ENCODE measurements at regions of chr5 and their contacts with region 1.

Region 1: GRCh38 chr5:91383027-91383955 is at the start of gene ARRDC3:
- DNase-seq: peak; percentile 99
- H3K4me3 ChIP-seq: peak within 1 kb of the TSS; percentile 47 to 78 (median 62)
- H3K27ac ChIP-seq: peak within 1 kb of the TSS; percentile 93 to 100 (median 99)
- H3K4me1 ChIP-seq: peaks cover 8 to 36% (median 23%) of the 10 kb centered on the region in 6 donors
- H3K27me3 ChIP-seq: no peaks in the 10 kb centered on the region
- CTCF ChIP-seq: peak in 3 of 11 experiments; percentile 15 to 43 (median 20)
- POLR2A ChIP-seq: peak; percentile 93 to 100 (median 97)
- total RNA-seq, gene ARRDC3: 32.5 to 124 (median 52.8) TPM

Region 2: GRCh38 chr5:90932052-90932699 is 451.1 kb before region 1 on chr5:
- intact Hi-C with region 1: loop called (anchors 10 kb)
- DNase-seq: no peak
- H3K4me3 ChIP-seq: no peak overlapping the region
- H3K27ac ChIP-seq: no peak overlapping the region
- H3K4me1 ChIP-seq: no peaks in the 10 kb centered on the region
- H3K27me3 ChIP-seq: no peaks in the 10 kb centered on the region
- CTCF ChIP-seq: peak; percentile 28 to 73 (median 57)
- POLR2A ChIP-seq: no peak

Region 3: GRCh38 chr5:91162534-91163381 is 220.5 kb before region 1 on chr5:
- intact Hi-C with region 1: no loop called
- DNase-seq: peak; percentile 82
- H3K4me3 ChIP-seq: peak overlapping the region in 1 of 8 donors; percentile 23
- H3K27ac ChIP-seq: peak overlapping the region in 7 of 8 donors; percentile 47 to 83 (median 74)
- H3K4me1 ChIP-seq: peaks cover 5 to 24% (median 15%) of the 10 kb centered on the region in 6 donors
- H3K27me3 ChIP-seq: no peaks in the 10 kb centered on the region
- CTCF ChIP-seq: no peak
- POLR2A ChIP-seq: no peak

Region 4: GRCh38 chr5:91225848-91226686 is 157.2 kb before region 1 on chr5:
- intact Hi-C with region 1: loop called (anchors 5 kb)
- DNase-seq: no peak
- H3K4me3 ChIP-seq: no peak overlapping the region
- H3K27ac ChIP-seq: no peak overlapping the region
- H3K4me1 ChIP-seq: no peaks in the 10 kb centered on the region
- H3K27me3 ChIP-seq: no peaks in the 10 kb centered on the region
- CTCF ChIP-seq: peak in 9 of 11 experiments; percentile 22 to 70 (median 52)
- POLR2A ChIP-seq: no peak

Region 5: DNA sequence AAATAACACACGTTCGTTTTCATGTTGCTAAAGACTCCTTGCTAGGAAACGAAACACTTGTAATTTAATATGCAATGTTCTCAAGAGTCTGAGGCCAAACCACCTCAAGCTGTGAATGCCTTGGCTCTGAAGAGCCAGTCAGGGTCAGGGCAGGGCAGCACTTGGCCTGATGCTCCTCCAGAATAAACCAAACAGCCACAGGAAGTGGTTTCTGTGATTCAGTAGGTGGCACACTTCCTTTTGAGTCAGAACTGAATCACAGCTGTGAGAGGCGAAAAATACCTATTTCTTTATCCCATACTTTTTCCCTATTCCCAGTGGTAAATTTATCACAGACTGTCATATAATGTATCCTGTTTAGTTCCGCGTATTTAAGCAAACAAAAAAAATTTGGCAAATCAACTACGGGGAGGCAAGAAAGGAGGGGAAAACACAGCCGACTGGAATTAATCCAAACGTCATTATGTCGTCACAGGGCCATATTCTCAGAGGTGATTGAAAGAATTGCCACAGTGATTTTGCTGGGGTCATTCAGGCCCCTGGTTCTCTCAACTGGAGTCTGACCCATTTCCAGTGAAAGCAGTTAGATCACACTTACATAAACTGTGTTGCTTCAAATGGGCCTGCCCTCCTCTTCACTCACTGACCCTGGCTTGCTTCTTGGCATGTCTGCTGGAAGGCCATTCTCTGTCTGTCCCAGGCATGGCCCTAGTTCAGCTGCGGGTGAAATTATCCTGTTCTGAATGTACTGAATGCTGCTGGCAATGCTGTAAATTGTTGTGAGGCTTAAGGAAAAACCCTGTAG is 71.4 kb before region 1 on chr5:
- intact Hi-C with region 1: no loop called
- DNase-seq: peak; percentile 84
- H3K4me3 ChIP-seq: peak overlapping the region in 1 of 8 donors; percentile 57
- H3K27ac ChIP-seq: peak overlapping the region; percentile 73 to 89 (median 81)
- H3K4me1 ChIP-seq: peaks cover 30 to 65% (median 43%) of the 10 kb centered on the region in 6 donors
- H3K27me3 ChIP-seq: no peaks in the 10 kb centered on the region
- CTCF ChIP-seq: peak in 3 of 11 experiments; percentile 9 to 23 (median 21)
- POLR2A ChIP-seq: no peak

Region 6: DNA sequence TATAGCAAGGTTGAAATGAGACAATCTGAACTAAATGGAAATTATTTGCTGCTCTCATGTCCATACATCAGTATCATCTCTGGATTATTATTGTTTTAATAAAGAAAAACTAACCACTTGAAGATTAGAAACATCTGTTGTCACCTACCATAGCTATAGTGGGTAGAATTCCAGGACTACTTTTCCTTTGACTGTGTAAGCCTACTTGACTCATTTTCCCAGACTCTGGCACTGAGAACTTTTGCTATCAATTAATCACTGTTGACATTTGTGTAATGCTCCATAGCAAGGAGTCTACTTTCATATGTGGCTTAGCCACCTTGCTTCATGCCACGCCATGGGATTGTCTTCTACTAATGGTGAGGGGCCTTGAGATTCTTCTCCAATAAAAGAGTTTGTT is 59.7 kb after region 1 on chr5:
- intact Hi-C with region 1: no loop called
- DNase-seq: no peak
- H3K4me3 ChIP-seq: no peak overlapping the region
- H3K27ac ChIP-seq: no peak overlapping the region
- H3K4me1 ChIP-seq: no peaks in the 10 kb centered on the region
- H3K27me3 ChIP-seq: no peaks in the 10 kb centered on the region
- CTCF ChIP-seq: no peak
- POLR2A ChIP-seq: no peak

Region 7: GRCh38 chr5:91722736-91723467 is 339.6 kb after region 1 on chr5:
- intact Hi-C with region 1: no loop called
- DNase-seq: no peak
- H3K4me3 ChIP-seq: no peak overlapping the region
- H3K27ac ChIP-seq: no peak overlapping the region
- H3K4me1 ChIP-seq: no peaks in the 10 kb centered on the region
- H3K27me3 ChIP-seq: no peaks in the 10 kb centered on the region
- CTCF ChIP-seq: no peak
- POLR2A ChIP-seq: no peak

Measured in spleen (tissue), 13 donors.